ENCODE measurements at regions of chr2 and their contacts with region 1.

Region 1: GRCh38 chr2:102473020-102473419 is at the start of gene SLC9A4:
- DNase-seq: peak; percentile 74
- H3K4me3 Mint-ChIP-seq: no peak within 1 kb of the TSS
- H3K27ac Mint-ChIP-seq: no peak within 1 kb of the TSS
- H3K4me1 Mint-ChIP-seq: no peaks in the 10 kb centered on the region
- H3K27me3 Mint-ChIP-seq: peaks cover 22% of the 10 kb centered on the region
- CTCF ChIP-seq: peak; percentile 65
- total RNA-seq, gene SLC9A4: 0.12 and 0.22 TPM in 2 replicates

Region 2: DNA sequence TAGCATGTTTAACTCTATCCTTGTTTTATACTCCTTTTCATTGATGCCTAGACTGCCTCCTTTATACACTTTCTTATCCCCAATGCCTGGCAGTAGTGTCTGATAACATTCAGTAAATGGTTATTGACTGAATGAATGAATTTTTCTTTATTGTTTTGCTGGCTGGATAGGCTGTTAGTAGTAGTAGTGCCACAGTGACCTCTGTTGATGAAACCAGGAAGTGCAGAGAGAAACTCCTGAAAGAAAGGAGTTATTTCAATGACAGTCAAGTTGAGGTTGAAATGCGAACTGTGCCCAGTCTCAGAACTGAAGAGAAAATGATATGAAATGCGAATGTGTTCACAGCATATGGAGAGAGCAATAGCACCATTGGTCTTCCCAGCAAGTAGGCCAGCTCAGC is 119.6 kb after region 1 on chr2:
- CTCF ChIA-PET with region 1: interaction called, 16 read pairs
- intact Hi-C with region 1: loop called (anchors 1 kb)
- DNase-seq: peak; percentile 67
- H3K4me3 Mint-ChIP-seq: no peak overlapping the region
- H3K27ac Mint-ChIP-seq: no peak overlapping the region
- H3K4me1 Mint-ChIP-seq: peaks cover 49% of the 10 kb centered on the region
- H3K27me3 Mint-ChIP-seq: no peaks in the 10 kb centered on the region
- CTCF ChIP-seq: peak; percentile 60

Region 3: GRCh38 chr2:102615622-102616436 is 142.8 kb after region 1 on chr2:
- CTCF ChIA-PET with region 1: interaction called, 32 read pairs
- intact Hi-C with region 1: loop called (anchors 1 kb)
- DNase-seq: peak; percentile 55
- H3K4me3 Mint-ChIP-seq: no peak overlapping the region
- H3K27ac Mint-ChIP-seq: no peak overlapping the region
- H3K4me1 Mint-ChIP-seq: no peaks in the 10 kb centered on the region
- H3K27me3 Mint-ChIP-seq: no peaks in the 10 kb centered on the region
- CTCF ChIP-seq: peak; percentile 85

Region 4: GRCh38 chr2:102703748-102704147 is 230.7 kb after region 1 on chr2:
- CTCF ChIA-PET with region 1: interaction called, 6 read pairs
- intact Hi-C with region 1: loop called (anchors 1 kb)
- DNase-seq: peak; percentile 37
- H3K4me3 Mint-ChIP-seq: no peak overlapping the region
- H3K27ac Mint-ChIP-seq: no peak overlapping the region
- H3K4me1 Mint-ChIP-seq: peaks cover 8% of the 10 kb centered on the region
- H3K27me3 Mint-ChIP-seq: no peaks in the 10 kb centered on the region
- CTCF ChIP-seq: no peak

Measured in Calu3 (cell line).